ENCODE measurements at regions of chr3 and their contacts with region 1.

Region 1: GRCh38 chr3:171846597-171846996 is 3.4 kb downstream of the TMEM212 start:
- DNase-seq: no peak
- H3K4me3 Mint-ChIP-seq: peak overlapping the region; percentile 47
- H3K27ac Mint-ChIP-seq: peak overlapping the region; percentile 84
- H3K4me1 Mint-ChIP-seq: peaks cover 24% of the 10 kb centered on the region
- H3K27me3 Mint-ChIP-seq: peaks cover 12% of the 10 kb centered on the region

Region 2: GRCh38 chr3:171799501-171799900 is 47.1 kb before region 1 on chr3:
- intact Hi-C with region 1: no loop called
- DNase-seq: no peak
- H3K4me3 Mint-ChIP-seq: no peak overlapping the region
- H3K27ac Mint-ChIP-seq: no peak overlapping the region
- H3K4me1 Mint-ChIP-seq: peaks cover 3% of the 10 kb centered on the region
- H3K27me3 Mint-ChIP-seq: peaks cover 8% of the 10 kb centered on the region

Region 3: DNA sequence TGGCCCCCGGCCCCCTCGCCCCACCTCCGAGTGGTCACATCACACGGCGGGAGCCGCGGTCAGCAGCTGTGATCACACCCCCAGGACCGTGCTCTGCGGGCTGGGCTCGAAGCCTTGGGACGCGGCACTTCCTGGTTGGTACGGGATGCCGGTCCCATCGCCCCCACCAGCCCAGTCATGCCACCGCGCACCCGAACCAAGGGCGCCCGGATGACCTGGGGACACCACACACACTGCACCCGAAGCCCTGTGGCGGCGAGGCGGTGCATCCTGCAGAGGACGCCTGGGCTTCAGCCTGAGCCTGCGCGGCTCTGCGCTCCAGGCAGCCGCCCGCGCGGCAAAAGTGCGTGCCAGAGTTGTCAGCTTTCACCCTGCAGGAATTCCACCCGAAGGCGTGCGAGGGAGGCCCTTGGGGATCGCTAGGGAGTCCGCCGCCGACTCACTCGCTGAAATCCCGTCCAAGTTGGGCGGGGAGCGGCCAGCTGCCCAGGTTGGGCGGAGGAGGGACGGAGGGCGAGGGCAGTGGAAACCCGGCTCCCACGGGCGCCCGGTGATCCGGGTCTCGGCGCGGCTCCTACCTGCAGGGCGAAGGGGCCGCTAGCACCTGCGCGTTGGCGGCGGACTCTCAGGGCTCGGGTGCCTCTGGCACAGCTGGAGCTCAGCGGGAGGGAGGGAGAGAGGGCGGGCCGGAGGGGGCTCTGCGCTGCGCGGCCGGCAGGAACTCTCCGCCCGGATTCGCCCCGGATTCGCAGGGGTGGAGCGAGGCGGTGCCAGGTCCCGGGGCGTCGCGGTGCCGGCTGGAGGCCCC is 36.6 kb before region 1 on chr3 and contains the start of gene PLD1:
- intact Hi-C with region 1: loop called (anchors 1 kb)
- DNase-seq: peak; percentile 51
- H3K4me3 Mint-ChIP-seq: peak within 1 kb of the TSS; percentile 77
- H3K27ac Mint-ChIP-seq: peak within 1 kb of the TSS; percentile 47
- H3K4me1 Mint-ChIP-seq: peaks cover 43% of the 10 kb centered on the region
- H3K27me3 Mint-ChIP-seq: peaks cover 24% of the 10 kb centered on the region
- total RNA-seq, gene PLD1: 1.0 and 1.1 TPM in 2 replicates

Region 4: DNA sequence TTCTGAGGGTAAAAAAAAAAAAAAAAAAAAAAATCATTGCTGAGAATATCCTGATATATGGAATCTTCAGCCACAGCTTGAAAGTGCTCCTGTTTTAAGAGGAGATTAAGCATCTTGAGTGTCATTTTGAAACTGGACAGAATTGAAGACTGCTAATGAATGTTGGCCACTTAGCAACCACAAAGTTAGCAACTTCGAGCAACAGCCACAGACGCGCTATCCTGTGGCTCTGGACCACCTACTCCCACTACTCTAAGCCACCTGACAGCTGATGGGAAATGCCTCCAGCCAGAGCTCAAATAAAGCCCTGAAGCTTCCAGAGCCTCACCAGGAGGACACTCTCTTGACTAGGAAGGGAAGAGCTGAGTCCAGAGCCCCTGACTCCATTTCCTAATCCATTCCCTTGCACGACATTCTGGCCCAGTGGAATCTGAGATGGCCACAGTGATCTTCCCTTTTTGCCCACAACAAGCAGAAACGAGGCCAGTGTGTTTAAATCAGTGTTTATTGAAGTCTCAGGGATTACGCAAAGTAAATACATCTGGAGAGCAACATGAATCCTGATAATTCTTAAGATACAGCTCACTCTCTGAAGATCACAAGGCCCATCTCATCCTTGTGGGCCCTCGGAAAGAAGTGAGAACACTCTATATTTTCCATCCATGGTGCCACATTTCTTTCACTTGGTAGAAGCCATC is 55.2 kb after region 1 on chr3:
- intact Hi-C with region 1: no loop called
- DNase-seq: no peak
- H3K4me3 Mint-ChIP-seq: no peak overlapping the region
- H3K27ac Mint-ChIP-seq: no peak overlapping the region
- H3K4me1 Mint-ChIP-seq: no peaks in the 10 kb centered on the region
- H3K27me3 Mint-ChIP-seq: peaks cover 10% of the 10 kb centered on the region